ENCODE measurements at regions of chr14 and their contacts with region 1.

Region 1: GRCh38 chr14:68307014-68307789 is 485.7 kb downstream of the ZFP36L1 start:
- DNase-seq: peak; percentile 87
- H3K4me3 Mint-ChIP-seq: peak overlapping the region; percentile 43
- H3K27ac Mint-ChIP-seq: peak overlapping the region; percentile 98
- H3K4me1 Mint-ChIP-seq: peaks cover 40% of the 10 kb centered on the region
- H3K27me3 Mint-ChIP-seq: no peaks in the 10 kb centered on the region
- CTCF ChIP-seq: no peak

Region 2: DNA sequence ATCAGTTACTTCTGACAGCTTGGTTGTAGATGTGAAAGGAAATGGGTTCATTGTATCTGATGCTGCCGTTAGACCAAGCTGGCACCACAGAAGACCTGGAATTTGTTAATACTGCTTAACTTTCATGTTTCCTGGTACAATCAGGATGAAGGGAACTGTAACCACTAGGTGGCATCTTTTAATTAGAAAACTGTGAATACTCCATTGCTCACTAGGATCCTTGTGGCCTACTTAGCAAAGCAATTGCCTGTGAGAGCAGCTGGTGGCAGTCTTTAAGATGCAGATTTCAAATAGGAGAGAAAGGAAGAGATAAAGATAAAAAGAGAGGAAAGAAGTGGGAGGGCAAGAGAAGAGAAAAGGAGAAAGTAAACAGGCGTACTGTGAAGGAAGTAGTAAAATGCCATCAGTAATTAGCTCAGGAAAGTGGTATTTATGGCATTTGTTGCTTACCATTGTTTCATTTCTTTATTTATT is 373.2 kb before region 1 on chr14:
- CTCF ChIA-PET with region 1: interaction called, 3 read pairs
- intact Hi-C with region 1: loop called (anchors 2 kb)
- DNase-seq: peak; percentile 27
- H3K4me3 Mint-ChIP-seq: no peak overlapping the region
- H3K27ac Mint-ChIP-seq: peak overlapping the region; percentile 3
- H3K4me1 Mint-ChIP-seq: peaks cover 9% of the 10 kb centered on the region
- H3K27me3 Mint-ChIP-seq: no peaks in the 10 kb centered on the region
- CTCF ChIP-seq: peak; percentile 67

Region 3: DNA sequence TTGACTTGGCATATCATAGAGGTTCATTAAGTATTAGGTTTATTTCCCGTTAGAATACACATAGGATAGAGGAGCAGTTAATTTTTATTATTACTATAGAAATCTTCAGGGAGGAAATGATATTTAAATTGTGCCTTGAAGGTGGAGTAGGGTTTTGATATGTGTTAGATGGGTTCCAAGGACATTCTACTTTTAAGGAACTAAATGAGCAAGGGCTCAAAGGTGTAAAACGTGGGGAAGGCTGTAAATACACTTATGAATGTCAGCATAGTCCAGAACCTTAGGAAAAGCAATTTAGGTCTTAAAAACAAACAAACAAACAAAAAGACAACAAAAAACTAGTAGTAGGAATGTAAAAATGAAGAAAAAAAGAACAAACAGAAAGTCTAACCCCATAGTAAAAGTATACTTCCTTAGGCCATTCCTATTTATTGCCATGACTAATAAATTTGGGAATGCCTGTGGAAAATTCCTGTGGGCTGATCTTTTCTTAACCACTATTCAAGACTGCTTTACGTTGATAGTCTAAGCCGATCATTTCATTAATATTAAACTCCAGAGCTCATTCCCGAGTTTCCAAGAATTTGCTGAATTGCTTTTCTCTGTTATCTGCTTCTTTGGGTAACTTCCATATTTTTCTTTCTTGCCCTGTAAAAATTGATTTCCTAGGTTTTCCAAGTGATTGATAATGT is 307.4 kb before region 1 on chr14:
- CTCF ChIA-PET with region 1: no interaction called
- intact Hi-C with region 1: no loop called
- DNase-seq: no peak
- H3K4me3 Mint-ChIP-seq: no peak overlapping the region
- H3K27ac Mint-ChIP-seq: no peak overlapping the region
- H3K4me1 Mint-ChIP-seq: peaks cover 8% of the 10 kb centered on the region
- H3K27me3 Mint-ChIP-seq: no peaks in the 10 kb centered on the region
- CTCF ChIP-seq: no peak

Region 4: GRCh38 chr14:68191567-68192321 is 115.5 kb before region 1 on chr14:
- CTCF ChIA-PET with region 1: interaction called, 5 read pairs
- intact Hi-C with region 1: loop called (anchors 2 kb)
- DNase-seq: peak; percentile 55
- H3K4me3 Mint-ChIP-seq: no peak overlapping the region
- H3K27ac Mint-ChIP-seq: peak overlapping the region; percentile 87
- H3K4me1 Mint-ChIP-seq: peaks cover 51% of the 10 kb centered on the region
- H3K27me3 Mint-ChIP-seq: no peaks in the 10 kb centered on the region
- CTCF ChIP-seq: no peak

Region 5: DNA sequence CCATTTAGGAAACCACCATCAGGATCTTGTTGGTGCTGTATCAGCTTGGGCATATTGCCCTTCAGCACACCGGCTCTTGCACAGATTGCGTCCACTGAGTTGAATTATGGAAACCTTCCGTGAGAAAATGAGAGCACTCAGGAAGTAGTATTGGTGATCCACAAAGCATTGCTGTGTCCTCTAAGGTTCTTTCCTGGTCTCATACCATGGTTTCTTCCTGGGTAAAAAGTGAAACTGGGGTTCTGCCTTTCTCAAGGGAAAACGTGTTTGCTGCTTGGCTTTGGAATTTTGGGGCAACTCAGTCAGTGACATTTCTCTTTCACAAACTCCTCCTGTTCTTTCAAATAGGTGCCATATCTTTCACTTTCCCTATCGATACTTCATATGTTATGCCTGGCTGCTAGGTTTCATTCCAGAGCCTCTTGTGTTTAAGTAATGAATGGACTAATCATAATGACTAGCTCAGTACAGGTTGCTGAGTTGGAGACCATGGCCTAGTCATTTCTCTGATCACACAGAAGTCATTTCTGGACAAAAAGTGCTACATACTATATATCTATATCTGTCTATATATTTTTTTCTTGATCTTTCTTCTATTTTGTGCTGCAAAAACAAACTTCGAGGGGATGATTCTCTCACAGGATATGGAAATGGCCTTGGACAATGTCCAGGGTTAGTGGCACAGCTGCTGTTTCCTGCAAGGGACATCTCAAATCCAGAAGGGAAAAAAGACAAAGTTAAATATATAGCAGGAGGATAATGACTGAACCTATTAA is 62.3 kb after region 1 on chr14:
- CTCF ChIA-PET with region 1: interaction called, 5 read pairs
- intact Hi-C with region 1: loop called (anchors 5 kb)
- DNase-seq: no peak
- H3K4me3 Mint-ChIP-seq: no peak overlapping the region
- H3K27ac Mint-ChIP-seq: no peak overlapping the region
- H3K4me1 Mint-ChIP-seq: peaks cover 10% of the 10 kb centered on the region
- H3K27me3 Mint-ChIP-seq: no peaks in the 10 kb centered on the region
- CTCF ChIP-seq: no peak

Region 6: DNA sequence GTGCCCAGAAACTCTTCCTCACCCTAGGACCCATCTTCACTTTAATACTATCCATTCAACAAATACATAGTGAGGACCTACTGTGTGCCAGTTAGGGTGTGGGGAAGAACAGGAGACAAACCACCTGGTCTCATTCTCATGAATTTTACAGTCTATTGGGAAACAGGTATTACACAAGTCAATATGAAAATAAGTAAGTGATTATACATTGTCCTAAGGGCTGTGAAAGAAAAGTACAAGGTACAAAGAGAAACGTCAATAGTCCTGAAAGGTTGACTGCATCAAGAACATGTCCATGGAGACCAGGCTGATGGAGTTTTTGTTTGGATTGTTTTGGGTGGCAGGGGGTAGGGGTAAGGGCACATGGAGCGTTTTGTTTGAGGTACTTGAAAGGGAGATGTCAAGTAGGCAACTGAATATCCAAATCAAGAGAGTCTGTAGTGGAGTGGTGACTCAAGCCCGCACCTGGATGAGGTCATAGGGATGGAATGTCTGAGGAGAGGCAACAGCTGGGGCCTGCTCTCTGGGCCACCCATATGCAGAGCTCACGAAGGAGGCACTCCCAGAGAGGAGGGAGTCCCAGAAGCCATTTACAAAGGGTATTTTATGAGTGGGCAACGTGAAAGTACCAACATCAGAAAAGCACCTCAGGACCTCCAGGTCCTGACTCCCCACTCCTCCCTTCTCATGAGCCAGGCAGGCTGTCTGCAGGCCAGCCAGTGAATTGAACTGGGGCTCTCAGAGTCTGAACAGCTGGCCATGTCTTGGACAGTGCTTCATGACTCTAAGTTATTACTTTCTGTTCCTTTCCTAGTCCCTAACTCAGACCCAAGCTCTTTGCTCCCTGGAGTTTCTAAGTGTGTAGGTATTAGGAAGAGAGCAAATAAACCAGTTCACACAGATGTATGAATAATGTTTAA is 213.7 kb after region 1 on chr14:
- CTCF ChIA-PET with region 1: interaction called, 4 read pairs
- intact Hi-C with region 1: loop called (anchors 5 kb)
- DNase-seq: peak; percentile 85
- H3K4me3 Mint-ChIP-seq: peak overlapping the region; percentile 34
- H3K27ac Mint-ChIP-seq: peak overlapping the region; percentile 86
- H3K4me1 Mint-ChIP-seq: peaks cover 47% of the 10 kb centered on the region
- H3K27me3 Mint-ChIP-seq: no peaks in the 10 kb centered on the region
- CTCF ChIP-seq: no peak

Region 7: DNA sequence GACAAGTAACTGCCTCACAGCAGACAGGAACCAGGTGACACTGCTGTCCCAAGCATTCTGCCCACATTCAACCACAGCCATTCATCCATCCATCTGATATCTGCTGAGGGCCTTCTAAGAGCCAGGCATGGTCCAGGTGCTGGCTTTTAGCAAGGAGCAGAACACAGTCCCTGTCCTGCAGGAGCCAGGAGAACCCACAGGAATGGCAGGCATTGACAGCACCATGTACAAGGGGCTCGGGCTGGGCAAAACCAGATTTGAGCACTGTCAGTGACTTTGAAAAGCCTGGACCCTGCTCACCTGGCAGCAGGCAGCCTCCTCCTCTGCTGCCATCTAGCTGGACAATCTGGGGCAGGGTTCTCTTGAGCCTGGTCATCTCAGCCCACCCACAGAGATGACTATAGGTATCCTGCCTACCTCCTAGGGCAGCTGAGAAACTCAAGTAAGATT is 348.7 kb after region 1 on chr14:
- CTCF ChIA-PET with region 1: no interaction called
- intact Hi-C with region 1: loop called (anchors 5 kb)
- DNase-seq: peak; percentile 45
- H3K4me3 Mint-ChIP-seq: no peak overlapping the region
- H3K27ac Mint-ChIP-seq: no peak overlapping the region
- H3K4me1 Mint-ChIP-seq: peaks cover 9% of the 10 kb centered on the region
- H3K27me3 Mint-ChIP-seq: no peaks in the 10 kb centered on the region
- CTCF ChIP-seq: no peak